Activated CD4-positive, alpha-beta T cell treated with anti-CD3 and anti-CD28 coated beads, Interleukin-2, amount 10 ng/mL, durations not matched to agents 7 days and 5 days (primary cell): ENCODE measurements at regions of chr5 and their contacts with region 1.

Region 1: GRCh38 chr5:134586866-134587524 is 45.6 kb downstream of the SAR1B start:
- DNase-seq: peak; percentile 86
- H3K4me3 Mint-ChIP-seq: no peak overlapping the region
- H3K27ac Mint-ChIP-seq: peak overlapping the region; percentile 81
- H3K4me1 Mint-ChIP-seq: peaks cover 14% of the 10 kb centered on the region
- H3K27me3 Mint-ChIP-seq: no peaks in the 10 kb centered on the region

Region 2: DNA sequence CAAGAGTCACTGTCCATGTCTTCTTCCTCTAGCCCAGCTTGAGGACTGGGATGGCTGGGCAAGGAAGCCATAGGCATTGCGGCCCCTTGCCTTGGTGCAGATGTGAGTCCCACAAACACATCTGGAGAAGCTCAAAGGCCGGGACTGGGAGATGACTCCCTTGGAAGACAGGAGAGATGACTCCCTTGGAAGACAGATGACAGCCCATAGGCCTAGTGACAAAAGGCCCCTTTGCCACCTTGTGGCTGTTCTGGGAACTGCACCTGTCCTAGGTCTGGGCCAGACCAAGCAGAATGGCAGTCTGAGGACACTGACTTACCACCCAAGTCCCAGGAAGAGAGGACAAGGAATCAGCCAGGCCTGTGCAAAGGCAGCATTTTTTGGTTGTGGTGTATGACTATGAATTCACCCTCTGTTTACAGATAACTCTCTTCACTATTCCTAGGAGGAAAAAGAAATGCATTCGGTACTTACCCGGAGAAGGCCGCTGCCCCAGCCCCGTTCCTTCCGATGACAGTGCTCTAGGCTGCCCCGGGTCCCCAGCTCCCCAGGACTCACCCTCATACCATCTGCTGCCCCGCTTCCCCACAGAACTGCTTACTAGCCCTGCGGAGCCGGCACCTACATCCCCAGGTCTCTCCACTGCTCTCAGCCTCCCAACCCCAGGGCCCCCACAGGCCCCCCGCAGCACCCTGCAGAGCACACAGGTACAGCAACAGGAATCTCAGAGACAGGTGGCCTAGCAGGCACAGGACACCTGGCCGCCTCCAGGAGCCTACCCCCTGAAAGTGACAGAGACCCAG is 441.0 kb before region 1 on chr5:
- CTCF ChIA-PET with region 1: no interaction called
- POLR2A ChIA-PET with region 1: no interaction called
- DNase-seq: peak; percentile 85
- H3K4me3 Mint-ChIP-seq: no peak overlapping the region
- H3K27ac Mint-ChIP-seq: peak overlapping the region; percentile 14
- H3K4me1 Mint-ChIP-seq: peaks cover 53% of the 10 kb centered on the region
- H3K27me3 Mint-ChIP-seq: no peaks in the 10 kb centered on the region

Region 3: DNA sequence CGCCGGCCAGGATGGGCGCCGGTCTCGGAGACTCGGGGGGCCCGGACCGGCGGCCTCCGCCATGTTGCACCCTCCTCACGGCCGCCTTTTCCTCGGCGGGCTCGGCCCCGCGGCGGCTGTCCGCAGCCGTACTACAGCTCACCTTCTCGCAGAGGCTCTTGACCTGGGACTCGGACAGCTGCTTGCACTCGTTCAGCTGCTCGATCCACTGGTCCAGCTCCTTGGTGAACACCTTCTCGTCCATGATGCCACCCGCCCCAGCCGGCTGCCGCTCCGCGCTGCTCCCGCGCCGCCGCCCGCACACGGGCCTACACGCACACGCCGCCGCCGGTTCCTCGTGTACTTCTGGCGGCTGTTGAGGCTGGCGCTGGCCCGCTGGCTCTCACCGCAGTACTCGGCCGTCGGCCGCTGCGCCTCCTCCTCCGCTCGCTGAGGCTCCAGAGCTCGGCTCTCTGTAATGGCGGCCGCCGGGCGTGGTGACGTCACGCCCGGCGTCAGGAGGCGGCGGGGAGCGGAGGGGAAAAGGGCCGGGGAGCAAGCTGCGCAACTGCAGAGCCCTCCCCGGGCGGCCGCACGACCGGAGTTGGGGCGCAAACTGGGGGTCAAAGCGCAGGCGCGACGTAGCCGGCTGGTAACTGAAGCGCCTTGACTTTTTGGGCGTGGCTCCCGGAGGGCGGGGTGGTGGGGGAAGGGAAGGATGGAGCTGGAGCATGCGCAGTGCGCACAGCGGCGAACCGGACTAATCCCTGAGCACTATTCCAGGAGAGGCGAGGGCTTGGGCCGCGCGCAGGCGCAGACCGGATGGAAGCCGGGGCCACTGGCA is 361.2 kb before region 1 on chr5 and contains the start of gene PPP2CA:
- CTCF ChIA-PET with region 1: interaction called, 10 read pairs
- POLR2A ChIA-PET with region 1: no interaction called
- DNase-seq: peak; percentile 99
- H3K4me3 Mint-ChIP-seq: peak within 1 kb of the TSS; percentile 97
- H3K27ac Mint-ChIP-seq: peak within 1 kb of the TSS; percentile 100
- H3K4me1 Mint-ChIP-seq: peaks cover 44% of the 10 kb centered on the region
- H3K27me3 Mint-ChIP-seq: no peaks in the 10 kb centered on the region
- total RNA-seq, gene PPP2CA: 128 to 136 TPM

Region 4: GRCh38 chr5:134370871-134371833 is 215.8 kb before region 1 on chr5 and contains the start of gene UBE2B:
- CTCF ChIA-PET with region 1: interaction called, 10 read pairs
- POLR2A ChIA-PET with region 1: no interaction called
- DNase-seq: peak; percentile 99
- H3K4me3 Mint-ChIP-seq: peak within 1 kb of the TSS; percentile 99
- H3K27ac Mint-ChIP-seq: peak within 1 kb of the TSS; percentile 100
- H3K4me1 Mint-ChIP-seq: peaks cover 55% of the 10 kb centered on the region
- H3K27me3 Mint-ChIP-seq: peaks cover 2% of the 10 kb centered on the region
- total RNA-seq, gene UBE2B: 79.2 to 87.4 TPM

Region 5: GRCh38 chr5:134568761-134569695 is 18.0 kb before region 1 on chr5:
- CTCF ChIA-PET with region 1: interaction called, 35 read pairs
- POLR2A ChIA-PET with region 1: no interaction called
- DNase-seq: no peak
- H3K4me3 Mint-ChIP-seq: no peak overlapping the region
- H3K27ac Mint-ChIP-seq: peak overlapping the region; percentile 76
- H3K4me1 Mint-ChIP-seq: peaks cover 23% of the 10 kb centered on the region
- H3K27me3 Mint-ChIP-seq: no peaks in the 10 kb centered on the region

Region 6: GRCh38 chr5:134609232-134609851 is 22.3 kb after region 1 on chr5:
- CTCF ChIA-PET with region 1: interaction called, 19 read pairs
- POLR2A ChIA-PET with region 1: no interaction called
- DNase-seq: peak; percentile 8
- H3K4me3 Mint-ChIP-seq: peak overlapping the region; percentile 2
- H3K27ac Mint-ChIP-seq: peak overlapping the region; percentile 91
- H3K4me1 Mint-ChIP-seq: peaks cover 48% of the 10 kb centered on the region
- H3K27me3 Mint-ChIP-seq: no peaks in the 10 kb centered on the region

Region 7: DNA sequence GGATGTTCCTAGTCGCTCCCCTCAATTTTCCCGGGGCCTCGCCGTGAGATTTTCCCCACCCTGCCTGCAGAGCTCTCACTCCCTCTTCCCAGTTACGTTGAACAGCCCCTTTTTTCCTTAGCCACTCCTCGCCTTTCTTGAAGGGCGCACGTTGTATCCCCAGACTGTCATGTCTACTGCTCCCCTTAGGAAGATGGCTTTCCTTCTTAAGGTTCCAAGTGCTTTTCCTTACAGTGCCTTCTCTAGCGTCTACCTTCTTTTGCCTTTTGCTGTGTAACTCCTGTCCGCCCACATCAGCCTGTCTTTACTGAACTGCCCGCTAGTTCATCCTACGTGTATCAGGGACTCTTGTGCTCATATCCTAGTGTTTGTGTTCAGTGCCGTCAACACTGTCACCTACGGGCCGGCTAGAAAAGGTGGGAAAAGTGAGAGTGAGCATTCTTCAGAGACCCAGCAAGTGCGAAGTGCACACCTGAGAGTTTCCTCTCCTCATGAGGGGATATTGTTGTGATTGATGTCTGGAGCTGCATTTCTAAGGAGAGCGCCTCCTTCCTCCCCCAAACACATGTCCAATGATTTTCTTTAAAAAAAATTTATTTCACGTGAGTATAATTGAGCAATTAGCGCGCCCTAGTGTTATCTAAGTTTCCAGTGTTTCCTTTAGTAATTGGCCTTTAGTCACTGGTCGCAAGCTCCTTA is 152.1 kb after region 1 on chr5:
- CTCF ChIA-PET with region 1: no interaction called
- POLR2A ChIA-PET with region 1: no interaction called
- DNase-seq: peak; percentile 48
- H3K4me3 Mint-ChIP-seq: peak overlapping the region; percentile 88
- H3K27ac Mint-ChIP-seq: peak overlapping the region; percentile 95
- H3K4me1 Mint-ChIP-seq: peaks cover 35% of the 10 kb centered on the region
- H3K27me3 Mint-ChIP-seq: no peaks in the 10 kb centered on the region

Region 8: DNA sequence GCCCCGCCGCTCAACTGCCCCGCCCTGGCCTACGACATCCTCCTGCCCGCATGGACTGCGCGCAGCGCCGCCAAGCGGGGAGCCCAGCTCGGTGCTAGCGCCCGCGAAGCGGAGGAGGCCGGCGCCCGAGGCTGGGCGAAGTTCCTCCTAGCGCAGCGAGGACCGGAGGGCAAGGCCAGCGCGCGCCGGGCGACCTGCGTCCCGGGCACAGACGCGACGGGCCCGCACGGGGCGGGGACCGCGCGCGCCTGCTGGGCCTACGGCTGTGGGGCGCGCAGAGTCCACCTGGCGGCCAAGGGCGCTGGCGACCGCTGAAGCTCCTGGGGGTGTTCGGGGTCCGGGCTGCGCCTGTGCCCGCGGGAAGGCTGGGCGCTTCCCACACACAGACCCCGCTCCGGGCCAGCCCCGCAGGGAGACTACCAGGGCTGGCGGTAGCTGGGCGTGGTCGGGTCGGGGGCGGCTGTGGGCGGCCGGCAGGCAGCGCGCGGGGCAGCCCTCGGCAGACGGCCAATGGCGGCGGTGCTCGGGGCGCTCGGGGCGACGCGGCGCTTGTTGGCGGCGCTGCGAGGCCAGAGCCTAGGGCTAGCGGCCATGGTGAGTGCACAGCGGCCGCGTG is 317.7 kb after region 1 on chr5 and contains the start of gene PCBD2:
- CTCF ChIA-PET with region 1: interaction called, 11 read pairs
- POLR2A ChIA-PET with region 1: no interaction called
- DNase-seq: peak; percentile 93
- H3K4me3 Mint-ChIP-seq: peak within 1 kb of the TSS; percentile 92
- H3K27ac Mint-ChIP-seq: peak within 1 kb of the TSS; percentile 99
- H3K4me1 Mint-ChIP-seq: peaks cover 23% of the 10 kb centered on the region
- H3K27me3 Mint-ChIP-seq: no peaks in the 10 kb centered on the region
- total RNA-seq, gene PCBD2: 15.4 to 15.7 TPM

Region 9: GRCh38 chr5:134944630-134945029 is 357.6 kb after region 1 on chr5:
- CTCF ChIA-PET with region 1: no interaction called
- POLR2A ChIA-PET with region 1: no interaction called
- DNase-seq: no peak
- H3K4me3 Mint-ChIP-seq: no peak overlapping the region
- H3K27ac Mint-ChIP-seq: no peak overlapping the region
- H3K4me1 Mint-ChIP-seq: no peaks in the 10 kb centered on the region
- H3K27me3 Mint-ChIP-seq: no peaks in the 10 kb centered on the region